HEK293 (cell line): ENCODE measurements at regions of chr11 and their contacts with region 1.

Region 1: DNA sequence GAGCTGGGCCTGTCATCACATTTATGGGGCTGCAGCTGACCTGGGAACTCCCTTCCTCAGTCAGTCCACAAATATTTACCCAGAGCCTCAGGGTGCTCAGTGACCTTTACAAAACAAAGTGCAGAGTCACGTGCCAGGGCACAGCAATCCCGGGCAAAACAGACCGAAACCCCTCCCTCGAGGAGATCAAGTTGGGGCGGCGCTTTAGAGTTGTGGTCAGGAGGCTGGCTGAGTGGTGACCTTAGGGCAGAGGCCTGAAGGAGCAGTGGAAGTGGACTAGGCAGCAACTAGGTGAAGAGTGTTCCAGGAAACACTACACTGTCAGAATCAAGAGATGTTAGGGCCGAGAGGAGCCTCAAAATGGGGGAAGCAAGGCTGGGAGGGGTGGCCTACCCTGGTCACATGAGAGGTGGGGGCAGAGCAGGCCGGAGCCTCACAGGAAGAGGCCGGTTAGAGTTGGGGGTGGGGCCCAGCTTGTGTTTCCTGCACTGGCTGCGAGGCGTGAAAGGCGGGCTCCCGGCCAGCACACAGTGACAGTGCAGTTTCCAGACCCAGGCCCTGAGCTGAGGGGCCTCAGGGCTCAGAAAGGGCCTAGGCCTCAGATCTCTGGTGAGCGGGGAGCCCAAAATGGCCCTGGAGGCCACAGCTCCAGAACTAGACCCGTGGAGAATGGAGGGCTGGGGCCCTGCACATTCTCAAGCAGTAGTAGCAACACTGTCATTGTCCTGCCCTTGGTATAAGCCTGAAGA is 3.7 kb upstream of the NEAT1 start:
- H3K4me3 ChIP-seq: peak overlapping the region; percentile 17
- H3K27ac ChIP-seq: peak overlapping the region; percentile 98
- H3K4me1 ChIP-seq: peaks cover 6% of the 10 kb centered on the region
- CTCF ChIP-seq: no peak

Region 2: DNA sequence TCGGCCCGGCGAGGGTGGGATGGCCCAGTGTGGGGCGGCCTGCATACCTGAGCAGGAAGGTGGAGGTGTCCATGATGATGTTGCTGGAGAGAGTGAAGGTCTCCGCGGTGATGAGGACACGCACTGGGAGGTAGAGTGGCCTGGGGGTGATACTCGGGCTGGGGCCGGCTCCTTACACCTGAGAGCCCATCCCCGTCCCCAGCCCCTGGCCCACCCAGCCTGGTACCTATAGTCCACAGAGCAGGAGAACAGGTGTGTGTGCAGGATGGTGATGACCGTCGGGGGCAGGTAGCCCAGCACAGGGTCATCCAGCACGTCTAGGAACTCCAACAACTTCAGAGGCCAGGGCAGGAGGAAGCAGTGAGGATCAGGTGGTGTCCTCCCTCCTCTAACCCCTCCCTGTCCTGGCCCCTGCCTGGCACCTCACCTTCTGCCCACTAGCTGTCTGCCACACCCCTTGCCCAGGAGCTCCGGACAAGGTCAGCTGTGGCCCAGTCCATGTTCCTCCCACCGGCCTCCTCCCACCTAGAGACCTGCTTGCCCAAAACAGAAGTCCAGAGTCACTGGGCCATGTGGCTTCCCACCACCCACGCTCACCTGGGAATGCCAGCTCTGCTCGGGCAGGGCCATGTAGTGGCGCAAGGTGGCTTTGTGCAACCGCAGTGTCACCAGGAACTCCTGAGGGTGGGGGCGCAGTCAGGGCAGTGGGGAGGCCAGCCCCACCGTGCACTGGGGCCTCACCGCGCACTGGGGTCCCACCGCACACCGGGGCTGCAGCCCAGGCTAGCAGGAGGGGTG is 513.2 kb before region 1 on chr11:
- CTCF ChIA-PET with region 1: no interaction called
- POLR2A ChIA-PET with region 1: no interaction called
- H3K4me3 ChIP-seq: no peak overlapping the region
- H3K27ac ChIP-seq: no peak overlapping the region
- H3K4me1 ChIP-seq: no peaks in the 10 kb centered on the region
- CTCF ChIP-seq: no peak

Region 3: GRCh38 chr11:65329944-65330403 is 88.9 kb before region 1 on chr11:
- CTCF ChIA-PET with region 1: no interaction called
- POLR2A ChIA-PET with region 1: interaction called, 15 read pairs
- H3K4me3 ChIP-seq: no peak overlapping the region
- H3K27ac ChIP-seq: no peak overlapping the region
- H3K4me1 ChIP-seq: no peaks in the 10 kb centered on the region
- CTCF ChIP-seq: no peak

Region 4: GRCh38 chr11:65382033-65382807 is 36.7 kb before region 1 on chr11 and contains the start of gene SLC25A45:
- CTCF ChIA-PET with region 1: interaction called, 12 read pairs
- POLR2A ChIA-PET with region 1: interaction called, 110 read pairs
- H3K4me3 ChIP-seq: peak within 1 kb of the TSS; percentile 24
- H3K27ac ChIP-seq: peak within 1 kb of the TSS; percentile 93
- H3K4me1 ChIP-seq: peaks cover 6% of the 10 kb centered on the region; the same call in 1 of the 2 replicates
- CTCF ChIP-seq: peak; percentile 98

Region 5: GRCh38 chr11:65448418-65449105 is 29.7 kb after region 1 on chr11:
- CTCF ChIA-PET with region 1: interaction called, 5 read pairs
- POLR2A ChIA-PET with region 1: interaction called, 21 read pairs
- H3K4me3 ChIP-seq: no peak overlapping the region
- H3K27ac ChIP-seq: no peak overlapping the region
- H3K4me1 ChIP-seq: no peaks in the 10 kb centered on the region
- CTCF ChIP-seq: no peak

Region 6: DNA sequence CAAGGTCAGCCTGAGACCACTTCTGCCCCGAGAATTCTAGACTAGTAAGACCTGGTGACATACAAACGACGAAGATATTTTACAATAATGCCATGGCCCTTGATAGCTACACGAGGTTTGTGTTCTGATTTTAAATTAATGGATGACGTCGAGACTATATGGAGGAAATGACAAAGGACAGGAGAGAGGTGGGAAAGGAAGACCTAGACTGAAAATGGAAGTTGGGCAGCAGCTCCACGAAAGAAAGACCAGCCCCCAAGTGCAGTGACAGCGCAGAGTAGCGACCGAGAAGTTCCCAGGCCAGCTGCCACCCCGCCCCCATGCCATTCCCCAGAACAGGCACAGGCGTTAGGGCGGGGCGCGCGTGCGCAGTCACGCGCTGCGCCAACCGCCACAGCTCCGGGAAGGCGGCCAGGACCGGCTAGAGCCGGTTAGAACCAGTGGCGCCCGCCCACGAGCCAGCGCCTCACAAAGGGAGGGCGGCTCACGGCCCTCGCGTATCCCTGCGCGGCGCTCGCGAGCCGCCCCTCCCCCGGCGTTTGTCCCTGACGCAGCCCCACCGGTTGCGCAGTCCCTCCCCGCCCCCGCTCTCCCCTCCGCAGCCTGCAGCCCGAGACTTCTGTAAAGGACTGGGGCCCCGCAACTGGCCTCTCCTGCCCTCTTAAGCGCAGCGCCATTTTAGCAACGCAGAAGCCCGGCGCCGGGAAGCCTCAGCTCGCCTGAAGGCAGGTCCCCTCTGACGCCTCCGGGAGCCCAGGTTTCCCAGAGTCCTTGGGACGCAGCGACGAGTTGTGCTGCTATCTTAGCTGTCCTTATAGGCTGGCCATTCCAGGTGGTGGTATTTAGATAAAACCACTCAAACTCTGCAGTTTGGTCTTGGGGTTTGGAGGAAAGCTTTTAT is 78.5 kb after region 1 on chr11:
- CTCF ChIA-PET with region 1: interaction called, 22 read pairs
- POLR2A ChIA-PET with region 1: interaction called, 1,129 read pairs
- H3K4me3 ChIP-seq: peak overlapping the region; percentile 98
- H3K27ac ChIP-seq: peak overlapping the region; percentile 98
- H3K4me1 ChIP-seq: peaks cover 7% of the 10 kb centered on the region
- CTCF ChIP-seq: no peak; the same call in 1 of the 2 replicates

Region 7: DNA sequence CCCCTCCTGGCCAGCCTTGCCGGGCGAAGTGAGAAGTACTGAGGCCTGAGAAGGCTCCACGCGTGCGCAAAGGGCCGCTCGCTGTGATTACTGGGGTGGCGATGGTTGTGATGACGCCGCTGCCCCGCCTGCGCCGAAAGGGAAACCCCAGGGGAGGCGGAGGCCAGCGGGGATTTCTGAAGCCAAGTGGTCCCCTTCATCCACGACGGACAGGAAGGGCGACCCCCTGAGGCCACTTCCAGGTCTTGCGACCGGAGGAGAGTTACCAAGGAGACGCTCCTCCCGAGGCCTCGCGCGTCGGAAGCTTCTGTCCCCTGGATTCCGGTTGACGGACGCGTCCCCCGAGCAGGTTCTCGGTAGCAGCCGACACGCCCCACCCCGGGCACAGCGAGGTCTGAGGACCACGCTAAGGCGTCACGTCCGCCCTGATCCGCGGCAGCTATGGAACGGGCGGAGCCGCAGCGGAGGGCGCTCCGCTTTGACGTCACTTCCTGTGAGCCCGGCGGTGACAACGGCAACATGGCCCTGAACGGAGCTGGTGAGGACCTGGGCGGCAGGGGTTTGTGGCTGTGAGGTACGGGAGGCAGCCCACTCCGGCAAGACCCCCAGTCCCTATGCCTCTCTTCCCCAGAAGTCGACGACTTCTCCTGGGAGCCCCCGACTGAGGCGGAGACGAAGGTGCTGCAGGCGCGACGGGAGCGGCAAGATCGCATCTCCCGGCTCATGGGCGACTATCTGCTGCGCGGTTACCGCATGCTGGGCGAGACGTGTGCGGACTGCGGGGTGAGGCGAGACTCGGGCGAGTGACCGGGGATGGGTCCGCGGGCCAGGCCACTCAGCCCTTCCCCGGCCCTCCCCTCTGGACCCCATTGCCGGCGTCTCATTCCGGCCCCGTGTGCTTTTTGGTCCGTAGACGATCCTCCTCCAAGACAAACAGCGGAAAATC is 151.4 kb after region 1 on chr11 and contains the start of gene ZNRD2:
- CTCF ChIA-PET with region 1: interaction called, 3 read pairs
- POLR2A ChIA-PET with region 1: interaction called, 13 read pairs
- H3K4me3 ChIP-seq: peak within 1 kb of the TSS; percentile 74
- H3K27ac ChIP-seq: peak within 1 kb of the TSS; percentile 93
- H3K4me1 ChIP-seq: peaks cover 16% of the 10 kb centered on the region; the same call in 1 of the 2 replicates
- CTCF ChIP-seq: peak; percentile 92

Region 8: GRCh38 chr11:66625041-66625751 is 1206.3 kb after region 1 on chr11:
- CTCF ChIA-PET with region 1: no interaction called
- POLR2A ChIA-PET with region 1: no interaction called
- H3K4me3 ChIP-seq: no peak overlapping the region
- H3K27ac ChIP-seq: no peak overlapping the region
- H3K4me1 ChIP-seq: 0 out of 2 replicates have a peak, but pooled peaks cover 3% of the 10 kb centered on the region
- CTCF ChIP-seq: no peak